H1 (cell line): ENCODE measurements at regions of chr3 and their contacts with region 1.

Region 1: GRCh38 chr3:113575206-113575605 is 42.9 kb downstream of the SIDT1 start:
- DNase-seq: no peak
- H3K4me3 ChIP-seq: no peak overlapping the region
- H3K27ac ChIP-seq: no peak overlapping the region
- H3K4me1 ChIP-seq: no peaks in the 10 kb centered on the region
- H3K27me3 ChIP-seq: no peaks in the 10 kb centered on the region
- CTCF ChIP-seq: no peak
- EP300 ChIP-seq: no peak
- POLR2A ChIP-seq: no peak
- RAD21 ChIP-seq: no peak

Region 2: DNA sequence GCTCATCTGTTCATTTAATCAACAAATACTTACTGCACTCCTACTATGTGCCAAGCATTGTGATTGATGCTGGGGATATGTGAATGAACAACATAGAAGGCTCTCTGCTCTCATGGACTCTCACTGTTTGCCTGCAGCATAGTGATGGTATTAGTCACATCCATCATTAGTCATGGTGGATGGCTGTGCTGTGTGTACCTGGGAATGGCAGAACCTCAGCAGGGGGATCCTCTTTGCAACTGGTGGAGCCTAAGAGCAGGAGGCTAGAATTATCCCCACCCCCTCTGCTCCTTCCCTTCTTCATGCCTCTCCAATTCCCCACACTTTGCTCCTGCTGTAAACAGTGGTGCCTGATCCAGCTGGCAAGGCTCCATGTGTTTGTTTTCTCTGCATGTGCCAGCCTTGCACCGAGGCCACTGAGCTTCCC is 343.4 kb before region 1 on chr3:
- CTCF ChIA-PET with region 1: no interaction called
- POLR2A ChIA-PET with region 1: no interaction called
- DNase-seq: no peak
- H3K4me3 ChIP-seq: no peak overlapping the region
- H3K27ac ChIP-seq: no peak overlapping the region
- H3K4me1 ChIP-seq: peaks cover 3 to 14% (median 10%) of the 10 kb centered on the region in 4 experiments; a peak in 6 of 7 replicates
- H3K27me3 ChIP-seq: no peaks in the 10 kb centered on the region
- CTCF ChIP-seq: no peak
- EP300 ChIP-seq: no peak
- POLR2A ChIP-seq: no peak
- RAD21 ChIP-seq: no peak

Region 3: GRCh38 chr3:113495035-113495434 is 80.2 kb before region 1 on chr3:
- CTCF ChIA-PET with region 1: interaction called, 25 read pairs
- POLR2A ChIA-PET with region 1: no interaction called
- DNase-seq: no peak
- H3K4me3 ChIP-seq: no peak overlapping the region
- H3K27ac ChIP-seq: no peak overlapping the region
- H3K4me1 ChIP-seq: no peaks in the 10 kb centered on the region
- H3K27me3 ChIP-seq: no peaks in the 10 kb centered on the region
- CTCF ChIP-seq: peak in 2 of 3 experiments; percentile 33 to 49; a peak in 2 of 4 replicates
- EP300 ChIP-seq: no peak
- POLR2A ChIP-seq: no peak
- RAD21 ChIP-seq: peak; percentile 39 to 53

Region 4: DNA sequence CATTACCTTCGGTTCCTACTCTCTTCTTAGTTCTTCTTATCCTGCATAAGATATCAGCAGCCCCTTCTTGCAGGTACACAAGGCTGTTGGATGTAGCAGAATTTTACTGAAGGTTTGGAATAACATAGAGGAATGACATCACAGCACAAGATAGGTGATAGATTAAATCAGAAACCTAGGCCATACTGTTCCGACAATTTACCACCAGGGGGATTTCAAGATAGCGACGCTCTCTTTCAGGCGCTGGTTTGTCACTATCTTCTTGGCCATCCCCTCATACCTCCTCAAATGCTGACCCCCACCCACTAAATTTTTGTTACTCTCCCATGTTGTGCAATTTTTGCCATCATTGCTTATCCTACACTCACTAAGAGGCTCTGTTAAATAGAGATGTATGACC is 39.3 kb before region 1 on chr3:
- CTCF ChIA-PET with region 1: interaction called, 13 read pairs
- POLR2A ChIA-PET with region 1: no interaction called
- DNase-seq: no peak
- H3K4me3 ChIP-seq: no peak overlapping the region
- H3K27ac ChIP-seq: no peak overlapping the region
- H3K4me1 ChIP-seq: peaks cover 0 to 2% (median 0%) of the 10 kb centered on the region in 4 experiments; a peak in 1 of 7 replicates
- H3K27me3 ChIP-seq: peaks cover 32 to 45% (median 39%) of the 10 kb centered on the region in 4 experiments
- CTCF ChIP-seq: peak; percentile 9 to 68 (median 44); a peak in 3 of 4 replicates
- EP300 ChIP-seq: no peak
- POLR2A ChIP-seq: no peak
- RAD21 ChIP-seq: peak; percentile 48 to 52

Region 5: DNA sequence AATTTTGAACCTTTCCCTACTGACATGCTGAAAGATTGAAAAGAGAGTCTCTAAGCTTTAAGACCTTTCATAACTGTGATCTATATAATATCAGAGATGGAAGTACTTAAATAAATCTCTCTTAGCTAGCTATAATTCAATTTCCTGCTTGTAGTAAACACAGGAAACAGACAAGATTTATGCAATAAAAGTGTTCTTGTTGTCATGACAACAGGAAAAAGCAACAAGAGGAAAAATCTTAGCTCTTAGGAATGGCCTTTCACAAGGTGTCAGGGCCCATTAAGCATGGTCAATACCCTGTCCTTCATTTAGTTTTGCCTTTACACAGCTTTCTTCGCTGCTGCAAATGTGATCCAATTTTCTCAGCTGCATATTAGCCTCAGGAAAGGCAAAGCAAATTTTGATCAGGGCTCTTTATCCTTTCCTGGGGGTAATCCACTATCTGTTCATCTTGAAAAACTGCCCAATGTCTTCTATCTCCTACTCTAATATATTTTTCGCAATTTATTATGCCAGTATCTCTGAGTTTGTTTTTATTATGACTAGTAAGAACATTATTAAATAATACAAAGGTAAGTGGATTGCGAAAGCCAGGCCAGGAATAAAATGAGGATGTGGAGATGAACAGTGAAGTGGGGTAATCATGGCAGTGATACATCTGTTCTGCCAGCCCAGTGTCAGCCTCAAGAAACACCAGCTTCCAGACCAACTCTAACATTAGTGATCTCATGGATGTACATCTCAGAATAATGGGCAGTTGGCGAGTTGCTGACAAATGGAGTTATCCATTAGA is 14.2 kb before region 1 on chr3:
- CTCF ChIA-PET with region 1: interaction called, 22 read pairs
- POLR2A ChIA-PET with region 1: no interaction called
- DNase-seq: no peak
- H3K4me3 ChIP-seq: no peak overlapping the region
- H3K27ac ChIP-seq: no peak overlapping the region
- H3K4me1 ChIP-seq: no peaks in the 10 kb centered on the region
- H3K27me3 ChIP-seq: no peaks in the 10 kb centered on the region
- CTCF ChIP-seq: no peak
- EP300 ChIP-seq: no peak
- POLR2A ChIP-seq: no peak
- RAD21 ChIP-seq: no peak

Region 6: GRCh38 chr3:113606539-113607218 is 31.5 kb after region 1 on chr3:
- CTCF ChIA-PET with region 1: interaction called, 14 read pairs
- POLR2A ChIA-PET with region 1: no interaction called
- DNase-seq: no peak
- H3K4me3 ChIP-seq: peak overlapping the region in 1 of 4 experiments; percentile 21; a peak in 1 of 8 replicates
- H3K27ac ChIP-seq: no peak overlapping the region; the same call in 1 of the 2 replicates
- H3K4me1 ChIP-seq: peaks cover 3 to 18% (median 13%) of the 10 kb centered on the region in 4 experiments
- H3K27me3 ChIP-seq: no peaks in the 10 kb centered on the region
- CTCF ChIP-seq: no peak
- EP300 ChIP-seq: no peak
- POLR2A ChIP-seq: no peak
- RAD21 ChIP-seq: no peak

Region 7: DNA sequence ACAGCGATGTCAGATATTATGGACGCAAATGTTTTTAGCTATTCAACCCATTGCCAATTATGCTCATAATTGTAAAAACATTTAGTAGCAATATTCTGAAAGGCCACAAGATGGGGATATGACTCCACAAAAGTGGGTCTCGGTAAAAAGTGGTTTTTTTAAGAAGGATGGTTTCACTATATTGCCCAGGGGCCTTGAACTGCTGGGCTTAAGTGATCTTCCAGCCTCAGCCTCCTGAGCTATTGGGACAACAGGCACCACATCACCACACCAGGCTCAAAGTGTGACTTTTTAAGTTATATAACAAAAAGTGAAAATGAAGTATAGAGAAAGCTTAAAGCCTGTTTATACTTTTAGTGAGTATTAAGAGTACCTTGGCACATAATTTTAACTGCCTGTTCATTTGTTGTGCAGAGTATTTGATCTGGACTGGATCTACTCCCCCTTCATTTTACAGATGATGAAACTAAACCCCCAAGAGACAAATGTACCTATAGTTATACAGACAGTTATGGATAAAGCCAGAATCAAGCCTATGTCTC is 161.4 kb after region 1 on chr3:
- CTCF ChIA-PET with region 1: no interaction called
- POLR2A ChIA-PET with region 1: no interaction called
- DNase-seq: no peak
- H3K4me3 ChIP-seq: no peak overlapping the region
- H3K27ac ChIP-seq: no peak overlapping the region
- H3K4me1 ChIP-seq: peaks cover 0 to 5% (median 0%) of the 10 kb centered on the region in 4 experiments; a peak in 3 of 7 replicates
- H3K27me3 ChIP-seq: no peaks in the 10 kb centered on the region
- CTCF ChIP-seq: peak in 2 of 3 experiments; percentile 36 to 50; a peak in 2 of 4 replicates
- EP300 ChIP-seq: no peak
- POLR2A ChIP-seq: no peak
- RAD21 ChIP-seq: peak; percentile 73 to 74